Right ventricle myocardium inferior (tissue), 1 donor: ENCODE measurements at regions of chr6 and their contacts with region 1.

Region 1: DNA sequence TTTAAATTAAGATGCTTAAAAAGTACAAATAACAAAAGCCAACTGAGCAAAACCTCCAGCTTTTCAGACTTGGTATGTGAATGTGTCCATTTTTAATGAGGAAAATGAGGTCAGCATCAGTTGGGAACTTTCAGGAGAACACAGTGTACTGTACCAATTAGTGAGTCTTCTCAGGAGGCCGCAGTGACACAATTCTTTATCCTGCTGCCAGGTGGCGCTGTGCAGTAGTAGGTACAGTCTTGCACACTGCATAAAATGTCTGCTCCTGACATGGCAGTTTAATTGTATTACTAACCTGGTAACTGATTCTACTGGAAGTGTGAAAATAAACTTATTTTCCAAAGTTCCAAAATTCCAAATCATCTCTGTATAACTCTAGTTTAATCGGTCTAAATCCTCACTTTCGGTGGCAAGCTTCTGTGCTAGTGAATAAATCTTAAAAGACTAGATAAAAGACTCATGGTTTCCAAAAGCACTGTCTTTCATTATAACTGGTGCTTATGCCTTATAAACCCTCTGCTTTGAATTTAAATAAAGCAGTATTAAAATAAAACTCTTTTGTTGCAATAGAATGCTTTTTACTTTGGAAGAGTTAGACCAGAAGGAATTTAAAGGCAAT is 214.8 kb upstream of the MMS22L start:
- DNase-seq: peak; percentile 71
- ATAC-seq: peak; percentile 81

Region 2: DNA sequence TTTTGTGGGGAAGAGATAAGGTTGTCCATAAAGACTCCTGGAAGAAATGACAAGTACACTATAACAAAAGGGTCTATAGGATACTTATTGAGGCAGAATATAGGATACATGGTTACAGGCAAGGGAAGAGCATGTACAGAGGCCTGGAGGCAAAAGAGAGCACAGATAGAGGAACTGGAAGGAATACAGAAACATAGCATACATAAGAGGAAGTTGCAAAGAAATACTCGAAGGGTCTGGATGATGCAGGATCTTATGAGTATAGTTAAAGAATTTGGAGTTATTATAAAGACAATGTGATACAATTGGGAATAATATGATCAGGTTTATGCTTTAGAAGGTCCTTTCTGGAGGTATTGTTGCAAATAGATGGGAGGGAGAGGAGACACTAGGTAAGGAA is 743.8 kb after region 1 on chr6:
- intact Hi-C with region 1: loop called (anchors 5 kb)
- DNase-seq: no peak
- ATAC-seq: no peak

Region 3: GRCh38 chr6:98845211-98846020 is 1347.6 kb after region 1 on chr6:
- intact Hi-C with region 1: loop called (anchors 2 kb)
- DNase-seq: peak; percentile 80
- ATAC-seq: peak; percentile 56